Colonic mucosa (tissue), 4 donors: ENCODE measurements at regions of chr20 and their contacts with region 1.

Region 1: GRCh38 chr20:25178563-25179438 is 16.7 kb upstream of the ENTPD6 start:
- DNase-seq: no peak
- H3K4me3 ChIP-seq: no peak overlapping the region
- H3K27ac ChIP-seq: no peak overlapping the region
- H3K4me1 ChIP-seq: no peaks in the 10 kb centered on the region
- H3K27me3 ChIP-seq: no peaks in the 10 kb centered on the region
- CTCF ChIP-seq: peak; percentile 59

Region 2: DNA sequence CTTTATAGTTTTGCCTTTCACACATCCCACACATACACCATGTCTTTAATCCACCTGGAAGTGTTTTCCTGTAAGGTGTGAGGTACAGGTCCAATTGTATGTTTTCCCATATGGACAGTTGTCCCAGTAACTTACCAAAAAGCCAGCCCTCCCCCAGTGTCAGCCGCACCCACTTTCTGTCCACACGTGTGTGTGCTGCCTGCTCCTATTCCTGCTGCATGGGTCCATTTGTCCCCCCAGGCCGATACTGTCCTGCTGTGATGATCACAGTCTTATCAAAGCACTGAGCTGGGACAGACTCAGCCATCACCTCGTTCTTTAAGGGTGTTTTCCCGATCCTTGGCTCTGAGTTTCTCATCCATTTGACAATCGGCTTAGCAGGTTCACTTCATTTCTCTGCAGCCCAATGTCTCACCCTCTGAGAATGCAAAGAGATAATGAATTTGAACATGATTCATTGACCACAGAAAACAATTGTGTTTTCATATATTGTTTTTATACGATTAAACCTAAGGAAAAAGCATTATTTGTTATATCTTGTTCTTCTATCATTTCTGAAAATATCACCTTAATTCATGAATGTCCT is 106.5 kb before region 1 on chr20:
- intact Hi-C with region 1: loop called (anchors 5 kb)
- DNase-seq: peak; percentile 11
- H3K4me3 ChIP-seq: no peak overlapping the region
- H3K27ac ChIP-seq: no peak overlapping the region
- H3K4me1 ChIP-seq: no peaks in the 10 kb centered on the region
- H3K27me3 ChIP-seq: peaks cover 7% of the 10 kb centered on the region
- CTCF ChIP-seq: no peak

Region 3: DNA sequence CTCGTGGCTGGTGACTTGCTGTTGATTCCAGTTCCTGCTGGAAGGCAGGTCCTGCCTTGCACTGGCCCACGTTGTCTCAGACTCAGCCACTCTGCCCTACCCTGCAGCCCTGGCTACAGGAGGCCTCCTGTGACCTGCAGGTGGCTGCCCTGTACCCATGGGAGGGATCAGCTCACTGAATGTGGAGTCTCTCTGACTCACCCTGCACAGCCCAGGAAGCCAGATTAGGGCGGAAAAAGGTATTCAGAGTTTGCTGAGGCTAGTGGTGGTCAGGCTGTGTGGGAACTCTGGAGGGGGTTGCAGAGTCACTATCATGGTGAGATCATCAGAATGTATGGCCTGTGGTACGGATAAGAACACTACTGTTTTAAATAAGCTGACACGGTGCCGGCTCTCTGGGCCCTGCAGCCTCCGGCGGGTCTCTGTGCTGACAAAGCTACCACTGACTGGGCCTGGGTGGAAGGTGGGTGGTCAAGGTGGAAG is 44.4 kb after region 1 on chr20:
- intact Hi-C with region 1: no loop called
- DNase-seq: peak; percentile 73
- H3K4me3 ChIP-seq: no peak overlapping the region
- H3K27ac ChIP-seq: peak overlapping the region; percentile 36
- H3K4me1 ChIP-seq: no peaks in the 10 kb centered on the region
- H3K27me3 ChIP-seq: no peaks in the 10 kb centered on the region
- CTCF ChIP-seq: peak; percentile 16